ENCODE measurements at regions of chr10 and their contacts with region 1.

Region 1: GRCh38 chr10:30751678-30752331 is 122.3 kb upstream of the LYZL2 start:
- DNase-seq: no peak
- ATAC-seq: no peak
- H3K4me3 Mint-ChIP-seq: no peak overlapping the region
- H3K27ac Mint-ChIP-seq: peak overlapping the region; percentile 58
- H3K4me1 Mint-ChIP-seq: peaks cover 36% of the 10 kb centered on the region
- H3K27me3 Mint-ChIP-seq: no peaks in the 10 kb centered on the region

Region 2: GRCh38 chr10:30763918-30764317 is 12.1 kb after region 1 on chr10:
- CTCF ChIA-PET with region 1: interaction called, 10 read pairs
- POLR2A ChIA-PET with region 1: no interaction called
- DNase-seq: peak; percentile 48
- ATAC-seq: peak; percentile 51
- H3K4me3 Mint-ChIP-seq: peak overlapping the region; percentile 34
- H3K27ac Mint-ChIP-seq: peak overlapping the region; percentile 76
- H3K4me1 Mint-ChIP-seq: peaks cover 29% of the 10 kb centered on the region
- H3K27me3 Mint-ChIP-seq: peaks cover 3% of the 10 kb centered on the region

Region 3: DNA sequence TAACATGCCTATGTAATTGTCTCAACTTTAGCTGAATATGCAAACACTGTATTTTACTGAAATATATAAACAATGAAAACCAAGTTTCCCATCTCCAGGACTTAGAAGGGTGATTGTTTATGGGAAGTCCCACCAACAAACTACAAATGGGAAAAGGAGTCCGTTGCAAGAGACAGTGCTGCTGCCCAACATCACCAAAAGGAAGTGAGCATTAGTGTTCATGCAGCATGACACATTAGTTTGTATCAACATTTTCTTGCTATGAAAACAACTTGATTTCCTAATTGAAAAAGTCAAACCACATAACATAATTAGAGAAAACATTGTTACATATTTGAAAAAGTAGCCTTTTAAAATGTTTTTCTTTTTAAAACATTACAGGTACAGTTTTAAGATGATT is 141.4 kb after region 1 on chr10:
- CTCF ChIA-PET with region 1: no interaction called
- POLR2A ChIA-PET with region 1: no interaction called
- DNase-seq: no peak
- ATAC-seq: no peak
- H3K4me3 Mint-ChIP-seq: no peak overlapping the region
- H3K27ac Mint-ChIP-seq: no peak overlapping the region
- H3K4me1 Mint-ChIP-seq: peaks cover 6% of the 10 kb centered on the region
- H3K27me3 Mint-ChIP-seq: no peaks in the 10 kb centered on the region